Activated CD4-positive, alpha-beta T cell treated with anti-CD3 and anti-CD28 coated beads for 36 hours (primary cell): ENCODE measurements at regions of chr19 and their contacts with region 1.

Region 1: DNA sequence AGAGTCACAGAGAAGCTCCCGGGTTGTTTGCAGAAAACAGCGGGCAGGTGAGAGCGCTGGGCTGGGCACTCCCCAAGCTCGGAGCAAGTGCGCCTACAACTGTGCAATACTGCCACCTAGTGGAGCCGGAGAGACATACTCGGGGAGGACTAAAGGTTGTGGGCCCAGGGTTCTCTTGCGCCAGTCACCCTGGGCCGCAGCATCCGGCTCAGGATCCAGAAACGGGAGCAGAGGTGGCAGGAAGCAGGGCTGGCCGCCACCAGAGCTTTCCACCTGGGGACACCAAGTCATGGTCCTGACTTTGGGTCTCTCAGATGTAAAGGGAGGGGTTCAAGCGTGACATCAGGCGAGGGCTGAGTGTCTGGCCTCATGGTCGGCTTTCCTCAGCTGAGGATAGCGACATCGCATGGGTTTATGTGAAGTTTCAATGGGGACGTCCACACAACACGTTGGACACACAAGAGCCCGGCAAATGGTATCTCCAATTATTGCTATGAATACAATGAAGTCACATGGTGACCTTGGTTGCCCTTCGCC is 11.2 kb upstream of the KLK4 start:
- DNase-seq: peak; percentile 90
- ATAC-seq: peak; percentile 100
- H3K4me3 Mint-ChIP-seq: no peak overlapping the region
- H3K27ac Mint-ChIP-seq: no peak overlapping the region
- H3K4me1 Mint-ChIP-seq: peaks cover 7% of the 10 kb centered on the region
- H3K27me3 Mint-ChIP-seq: peaks cover 34% of the 10 kb centered on the region

Region 2: DNA sequence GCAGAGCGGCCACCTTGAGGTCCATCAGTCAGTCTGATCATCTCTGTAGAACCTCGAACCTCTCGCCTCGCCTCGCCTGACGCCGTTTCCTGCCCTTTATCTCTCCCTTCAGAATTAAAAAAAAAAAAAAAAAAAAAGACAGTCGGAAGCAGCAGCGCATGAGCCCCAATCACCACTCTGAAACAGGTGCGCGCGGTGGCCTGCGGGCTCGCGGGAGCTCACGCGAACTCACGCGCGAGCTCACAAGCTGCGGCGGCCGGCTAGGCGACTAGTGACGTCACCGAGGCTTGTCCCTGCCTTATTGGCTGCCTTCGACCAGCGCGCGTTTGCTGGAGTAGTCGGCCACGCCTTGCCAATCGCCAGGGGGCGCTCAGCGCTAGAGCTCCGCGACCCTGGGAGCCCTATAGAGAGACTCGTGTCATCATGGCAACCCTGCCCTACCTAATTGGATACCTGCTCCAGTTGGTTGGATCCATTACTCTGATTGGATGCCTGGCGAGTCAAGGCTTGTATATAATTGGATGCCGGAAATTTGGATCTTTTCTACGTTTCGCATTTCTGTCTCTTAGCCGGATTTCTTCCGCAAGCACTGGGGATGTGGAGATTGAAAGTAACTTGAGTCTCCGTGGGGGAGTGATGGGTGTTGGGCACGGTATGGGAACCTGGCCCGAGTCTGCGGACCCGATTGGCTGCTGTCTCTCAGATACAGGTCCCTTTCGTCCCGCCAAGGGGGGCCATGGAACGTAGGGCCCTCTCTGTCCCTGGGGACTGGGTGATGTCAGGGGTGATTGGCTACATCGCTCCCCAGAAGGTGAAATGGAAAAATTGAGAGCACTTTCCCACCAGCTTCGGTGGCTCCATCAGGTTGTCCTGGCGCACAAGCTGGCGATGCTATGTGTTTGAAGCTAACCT is 314.3 kb before region 1 on chr19:
- CTCF ChIA-PET with region 1: interaction called, 3 read pairs
- POLR2A ChIA-PET with region 1: no interaction called
- intact Hi-C with region 1: loop called in 1 of 2 experiments (anchors 1 kb)
- DNase-seq: peak; percentile 95
- ATAC-seq: peak; percentile 93
- H3K4me3 Mint-ChIP-seq: peak overlapping the region; percentile 5
- H3K27ac Mint-ChIP-seq: no peak overlapping the region
- H3K4me1 Mint-ChIP-seq: peaks cover 13% of the 10 kb centered on the region
- H3K27me3 Mint-ChIP-seq: peaks cover 35% of the 10 kb centered on the region

Region 3: GRCh38 chr19:50777754-50778303 is 144.6 kb before region 1 on chr19:
- CTCF ChIA-PET with region 1: interaction called, 5 read pairs
- POLR2A ChIA-PET with region 1: no interaction called
- intact Hi-C with region 1: loop called in 1 of 2 experiments (anchors 5 kb)
- DNase-seq: peak; percentile 49
- ATAC-seq: no peak
- H3K4me3 Mint-ChIP-seq: no peak overlapping the region
- H3K27ac Mint-ChIP-seq: no peak overlapping the region
- H3K4me1 Mint-ChIP-seq: peaks cover 6% of the 10 kb centered on the region
- H3K27me3 Mint-ChIP-seq: peaks cover 59% of the 10 kb centered on the region

Region 4: GRCh38 chr19:50835785-50836542 is 86.4 kb before region 1 on chr19:
- CTCF ChIA-PET with region 1: interaction called, 3 read pairs
- POLR2A ChIA-PET with region 1: no interaction called
- intact Hi-C with region 1: loop called in 1 of 2 experiments (anchors 5 kb)
- DNase-seq: peak; percentile 88
- ATAC-seq: peak; percentile 95
- H3K4me3 Mint-ChIP-seq: peak overlapping the region; percentile 68
- H3K27ac Mint-ChIP-seq: peak overlapping the region; percentile 37
- H3K4me1 Mint-ChIP-seq: peaks cover 7% of the 10 kb centered on the region
- H3K27me3 Mint-ChIP-seq: peaks cover 46% of the 10 kb centered on the region

Region 5: GRCh38 chr19:50933640-50934039 is 11.3 kb after region 1 on chr19:
- CTCF ChIA-PET with region 1: interaction called, 10 read pairs
- POLR2A ChIA-PET with region 1: no interaction called
- intact Hi-C with region 1: no loop called
- DNase-seq: no peak
- ATAC-seq: no peak
- H3K4me3 Mint-ChIP-seq: no peak overlapping the region
- H3K27ac Mint-ChIP-seq: no peak overlapping the region
- H3K4me1 Mint-ChIP-seq: no peaks in the 10 kb centered on the region
- H3K27me3 Mint-ChIP-seq: peaks cover 30% of the 10 kb centered on the region